ENCODE measurements at regions of chr4 and their contacts with region 1.

Region 1: DNA sequence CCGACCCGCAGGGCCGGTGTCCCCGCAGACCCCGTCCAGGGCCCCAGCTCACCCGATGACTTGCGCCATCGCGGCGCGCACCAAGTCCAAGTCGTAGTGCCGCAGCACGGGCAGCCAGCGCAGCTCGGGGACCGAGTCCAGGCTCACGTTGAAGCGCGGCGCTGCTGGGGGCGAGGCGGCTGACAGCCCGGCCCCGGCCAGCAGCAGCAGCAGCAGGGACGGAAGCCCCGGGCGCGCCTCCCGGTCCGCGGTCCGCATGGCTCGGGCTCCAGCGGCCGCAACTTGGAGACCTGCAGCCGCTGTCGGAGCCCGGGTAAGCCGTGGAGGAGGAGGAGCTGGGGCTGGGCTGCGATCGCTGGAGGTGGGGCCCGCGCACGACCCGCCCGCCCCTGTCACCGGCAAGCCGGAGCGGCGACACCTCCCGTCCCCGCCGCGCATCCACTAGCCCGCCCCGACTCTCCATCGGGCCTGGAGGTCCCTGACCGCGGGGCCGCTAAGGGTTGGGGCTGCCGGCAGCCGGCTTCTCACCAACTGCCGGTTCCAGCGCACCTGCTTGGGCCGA is at the start of gene NAAA:
- DNase-seq: peak; percentile 44 to 92 (median 72)
- ATAC-seq: peak; percentile 79
- H3K4me3 ChIP-seq: peak within 1 kb of the TSS; percentile 71 to 85
- H3K4me3 Mint-ChIP-seq: peak within 1 kb of the TSS; percentile 95
- H3K27ac ChIP-seq: peak within 1 kb of the TSS; percentile 77 to 88
- H3K27ac Mint-ChIP-seq: peak within 1 kb of the TSS; percentile 95
- H3K4me1 ChIP-seq: peaks cover 5% of the 10 kb centered on the region
- H3K4me1 Mint-ChIP-seq: peaks cover 26% of the 10 kb centered on the region
- H3K27me3 ChIP-seq: no peaks in the 10 kb centered on the region
- H3K27me3 Mint-ChIP-seq: no peaks in the 10 kb centered on the region
- CTCF ChIP-seq: no peak
- total RNA-seq, gene NAAA: 26.1 to 30.4 TPM

Region 2: GRCh38 chr4:75514131-75514948 is 426.4 kb before region 1 on chr4 and contains the starts of genes RCHY1 and THAP6:
- CTCF ChIA-PET with region 1: no interaction called
- POLR2A ChIA-PET with region 1: interaction called, 8 read pairs
- intact Hi-C with region 1: loop called (anchors 1 to 5 kb)
- DNase-seq: peak; percentile 84 to 97 (median 92)
- ATAC-seq: peak; percentile 87
- H3K4me3 ChIP-seq: peak within 1 kb of the TSS; percentile 92 to 94
- H3K4me3 Mint-ChIP-seq: no peak within 1 kb of the TSS
- H3K27ac ChIP-seq: peak within 1 kb of the TSS; percentile 96 to 98
- H3K27ac Mint-ChIP-seq: peak within 1 kb of the TSS; percentile 99
- H3K4me1 ChIP-seq: peaks cover 55% of the 10 kb centered on the region
- H3K4me1 Mint-ChIP-seq: peaks cover 63% of the 10 kb centered on the region
- H3K27me3 ChIP-seq: no peaks in the 10 kb centered on the region
- H3K27me3 Mint-ChIP-seq: no peaks in the 10 kb centered on the region
- CTCF ChIP-seq: no peak
- total RNA-seq, gene RCHY1: 45.4 to 52.8 TPM
- total RNA-seq, gene THAP6: 15.3 to 16.3 TPM

Region 3: DNA sequence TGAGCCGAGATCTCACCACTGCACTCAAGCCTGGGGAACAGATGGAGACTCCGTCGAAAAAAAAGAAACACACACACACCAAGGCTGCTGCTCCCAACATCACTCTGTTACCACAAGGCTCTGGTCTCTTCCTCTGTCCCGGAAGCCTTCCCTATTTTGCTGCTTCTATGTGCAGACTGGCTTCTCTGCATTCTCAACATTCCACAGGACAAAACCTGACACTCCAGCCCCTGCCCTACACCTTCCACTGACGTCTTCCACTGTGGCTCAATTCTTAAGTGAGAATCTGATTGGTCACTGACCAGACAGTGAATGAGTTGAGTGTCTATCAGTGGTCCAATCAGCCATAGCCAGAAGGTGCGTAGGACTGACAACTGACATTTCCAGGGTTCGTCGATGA is 379.0 kb before region 1 on chr4:
- CTCF ChIA-PET with region 1: no interaction called
- POLR2A ChIA-PET with region 1: no interaction called
- intact Hi-C with region 1: no loop called
- DNase-seq: no peak
- ATAC-seq: no peak
- H3K4me3 ChIP-seq: no peak overlapping the region
- H3K4me3 Mint-ChIP-seq: no peak overlapping the region
- H3K27ac ChIP-seq: no peak overlapping the region
- H3K27ac Mint-ChIP-seq: no peak overlapping the region
- H3K4me1 ChIP-seq: no peaks in the 10 kb centered on the region
- H3K4me1 Mint-ChIP-seq: no peaks in the 10 kb centered on the region
- H3K27me3 ChIP-seq: no peaks in the 10 kb centered on the region
- H3K27me3 Mint-ChIP-seq: peaks cover 12% of the 10 kb centered on the region
- CTCF ChIP-seq: no peak

Region 4: GRCh38 chr4:75724066-75724866 is 216.5 kb before region 1 on chr4 and contains the start of gene USO1:
- CTCF ChIA-PET with region 1: no interaction called
- POLR2A ChIA-PET with region 1: no interaction called
- intact Hi-C with region 1: loop called (anchors 2 to 10 kb)
- DNase-seq: peak; percentile 98 to 100 (median 99)
- ATAC-seq: peak; percentile 92
- H3K4me3 ChIP-seq: peak within 1 kb of the TSS; percentile 58 to 99
- H3K4me3 Mint-ChIP-seq: peak within 1 kb of the TSS; percentile 99
- H3K27ac ChIP-seq: peak within 1 kb of the TSS; percentile 70 to 93
- H3K27ac Mint-ChIP-seq: peak within 1 kb of the TSS; percentile 99
- H3K4me1 ChIP-seq: peaks cover 32% of the 10 kb centered on the region
- H3K4me1 Mint-ChIP-seq: peaks cover 54% of the 10 kb centered on the region
- H3K27me3 ChIP-seq: no peaks in the 10 kb centered on the region
- H3K27me3 Mint-ChIP-seq: no peaks in the 10 kb centered on the region
- CTCF ChIP-seq: peak; percentile 79
- total RNA-seq, gene USO1: 9.8 to 10.2 TPM

Region 5: GRCh38 chr4:75916091-75916661 is 24.6 kb before region 1 on chr4:
- CTCF ChIA-PET with region 1: interaction called, 3 read pairs
- POLR2A ChIA-PET with region 1: no interaction called
- intact Hi-C with region 1: loop called in 1 of 2 experiments (anchors 1 kb)
- DNase-seq: peak in 4 of 9 experiments; percentile 8 to 65 (median 37)
- ATAC-seq: peak; percentile 67
- H3K4me3 ChIP-seq: no peak overlapping the region
- H3K4me3 Mint-ChIP-seq: no peak overlapping the region
- H3K27ac ChIP-seq: no peak overlapping the region
- H3K27ac Mint-ChIP-seq: no peak overlapping the region
- H3K4me1 ChIP-seq: no peaks in the 10 kb centered on the region
- H3K4me1 Mint-ChIP-seq: no peaks in the 10 kb centered on the region
- H3K27me3 ChIP-seq: no peaks in the 10 kb centered on the region
- H3K27me3 Mint-ChIP-seq: no peaks in the 10 kb centered on the region
- CTCF ChIP-seq: peak; percentile 72

Region 6: DNA sequence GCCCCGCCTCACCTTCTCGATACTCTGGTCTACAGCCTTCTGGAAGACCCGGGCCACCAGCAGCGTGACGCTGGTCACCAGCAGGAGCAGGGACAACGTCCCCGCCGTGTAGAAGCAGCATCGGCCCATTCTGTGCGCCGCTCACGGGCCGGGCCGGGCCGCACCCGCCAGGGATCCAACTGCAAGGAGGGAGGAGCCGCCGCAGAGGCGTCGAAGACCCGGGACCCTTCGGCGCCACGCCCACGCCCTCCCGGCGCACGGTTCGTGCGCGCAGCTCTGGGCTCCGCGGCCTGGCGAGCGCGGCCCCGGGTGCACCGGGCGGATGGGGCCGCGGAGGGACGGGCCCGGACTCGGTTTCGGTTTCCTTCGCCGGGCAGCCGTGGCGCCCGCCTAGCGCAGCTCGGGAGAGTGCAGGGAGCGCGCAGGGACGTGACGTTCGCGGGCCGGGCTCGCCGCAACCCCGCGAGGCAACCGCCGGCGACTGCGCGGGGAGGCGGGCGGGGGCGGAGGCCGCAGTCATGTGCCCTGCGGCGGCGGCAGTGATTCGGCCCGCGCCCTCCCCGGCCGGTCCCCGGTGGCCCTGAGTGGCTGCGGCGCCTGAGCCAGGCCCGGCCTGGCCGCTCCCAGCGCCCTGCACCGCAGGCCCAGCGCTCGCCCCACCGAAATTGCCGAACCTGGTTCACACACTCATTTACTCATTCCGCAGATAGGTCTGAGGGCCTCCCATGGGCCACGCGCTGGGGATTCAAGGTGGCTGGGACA is 272.8 kb after region 1 on chr4 and contains the start of gene SCARB2:
- CTCF ChIA-PET with region 1: no interaction called
- POLR2A ChIA-PET with region 1: no interaction called
- intact Hi-C with region 1: loop called (anchors 5 kb)
- DNase-seq: peak; percentile 44 to 91 (median 73)
- ATAC-seq: peak; percentile 64
- H3K4me3 ChIP-seq: peak within 1 kb of the TSS; percentile 71 to 75
- H3K4me3 Mint-ChIP-seq: peak within 1 kb of the TSS; percentile 89
- H3K27ac ChIP-seq: peak within 1 kb of the TSS; percentile 85
- H3K27ac Mint-ChIP-seq: peak within 1 kb of the TSS; percentile 95
- H3K4me1 ChIP-seq: peaks cover 29% of the 10 kb centered on the region
- H3K4me1 Mint-ChIP-seq: peaks cover 59% of the 10 kb centered on the region
- H3K27me3 ChIP-seq: no peaks in the 10 kb centered on the region
- H3K27me3 Mint-ChIP-seq: no peaks in the 10 kb centered on the region
- CTCF ChIP-seq: no peak
- total RNA-seq, gene SCARB2: 33.3 to 34.4 TPM

Measured in CD8-positive, alpha-beta T cell (primary cell).